Cardiac septum (tissue), 1 donor: ENCODE measurements at regions of chr7 and their contacts with region 1.

Region 1: GRCh38 chr7:34133983-34134782 is 228.8 kb downstream of the BMPER start:
- DNase-seq: peak; percentile 78

Region 2: DNA sequence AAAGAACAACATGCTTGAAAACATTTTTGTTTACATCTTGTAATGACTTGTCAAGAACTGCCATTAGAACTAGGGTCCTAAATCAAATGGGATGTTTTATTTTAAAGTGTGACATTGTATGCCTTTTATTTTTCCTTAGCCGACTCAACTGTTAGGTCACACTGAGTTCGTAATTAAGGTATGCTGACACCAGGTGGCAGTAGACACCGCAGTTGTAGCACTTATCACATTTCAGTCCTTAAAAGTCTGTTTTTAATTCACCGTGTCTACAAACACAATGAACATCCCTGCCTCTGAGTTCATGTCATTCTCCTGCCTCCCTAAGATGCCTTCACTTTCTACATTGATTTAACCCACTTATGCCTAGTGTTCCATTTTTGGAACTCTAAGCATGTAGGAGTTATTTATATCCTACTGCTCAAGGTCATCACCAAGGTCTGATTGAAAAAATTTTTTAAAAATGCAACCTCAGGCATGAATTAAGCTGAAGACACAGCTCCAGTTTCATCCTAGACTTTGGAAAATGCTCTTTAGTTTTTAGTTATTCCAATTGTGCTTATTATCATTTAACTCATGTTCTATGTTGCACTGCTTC is 42.8 kb before region 1 on chr7:
- intact Hi-C with region 1: no loop called
- DNase-seq: no peak

Region 3: DNA sequence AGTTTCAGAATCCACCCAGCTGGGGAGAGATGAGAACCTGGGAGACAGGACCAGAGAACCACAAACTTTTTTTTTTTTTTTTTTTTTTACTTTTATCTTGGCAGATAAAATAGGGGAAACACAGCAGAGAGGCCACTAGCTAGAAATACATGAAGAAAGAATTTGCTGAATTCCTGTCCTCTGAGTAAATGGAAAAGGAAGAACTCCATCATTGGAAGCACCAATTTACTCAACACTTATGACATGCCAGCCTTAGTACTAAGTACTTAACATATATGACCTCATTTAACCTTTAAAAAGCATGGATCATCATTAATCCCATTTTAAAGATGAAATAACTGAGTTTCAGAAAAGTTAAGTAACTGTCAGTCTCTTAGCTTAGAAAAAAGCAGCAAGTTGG is 180.8 kb after region 1 on chr7:
- intact Hi-C with region 1: no loop called
- DNase-seq: no peak

Region 4: GRCh38 chr7:34430458-34430857 is 296.3 kb after region 1 on chr7:
- intact Hi-C with region 1: loop called (anchors 10 kb)
- DNase-seq: no peak

Region 5: GRCh38 chr7:34596892-34597291 is 462.7 kb after region 1 on chr7:
- intact Hi-C with region 1: loop called (anchors 10 kb)
- DNase-seq: no peak